ENCODE measurements at regions of chr15 and their contacts with region 1.

Region 1: DNA sequence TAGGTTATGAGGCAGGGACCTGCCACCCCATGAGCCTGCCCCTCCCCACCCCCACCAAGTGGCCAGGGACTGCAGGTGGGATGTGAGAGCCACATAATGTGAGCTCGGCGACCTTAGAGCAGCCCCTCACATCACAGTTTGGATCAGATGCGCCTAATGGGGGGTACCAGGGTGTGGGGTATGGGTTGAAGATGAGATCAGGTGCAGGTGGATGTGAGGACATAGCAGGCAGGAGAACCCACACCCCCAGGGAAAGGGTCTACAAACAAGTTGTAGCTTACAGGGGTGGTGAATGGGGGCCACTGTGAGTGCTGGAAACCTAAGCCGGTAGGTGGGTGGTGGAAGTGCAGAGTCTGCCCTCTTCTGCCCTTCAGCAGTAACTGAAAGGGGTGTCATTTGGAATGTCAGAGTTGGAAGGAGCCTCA is 94.0 kb downstream of the CORO2B start:
- DNase-seq: no peak
- ATAC-seq: no peak
- H3K4me3 ChIP-seq: no peak overlapping the region
- H3K27ac ChIP-seq: no peak overlapping the region
- H3K4me1 ChIP-seq: peaks cover 2% of the 10 kb centered on the region; the same call in 1 of the 2 replicates
- H3K27me3 ChIP-seq: no peaks in the 10 kb centered on the region
- CTCF ChIP-seq: peak; percentile 41

Region 2: DNA sequence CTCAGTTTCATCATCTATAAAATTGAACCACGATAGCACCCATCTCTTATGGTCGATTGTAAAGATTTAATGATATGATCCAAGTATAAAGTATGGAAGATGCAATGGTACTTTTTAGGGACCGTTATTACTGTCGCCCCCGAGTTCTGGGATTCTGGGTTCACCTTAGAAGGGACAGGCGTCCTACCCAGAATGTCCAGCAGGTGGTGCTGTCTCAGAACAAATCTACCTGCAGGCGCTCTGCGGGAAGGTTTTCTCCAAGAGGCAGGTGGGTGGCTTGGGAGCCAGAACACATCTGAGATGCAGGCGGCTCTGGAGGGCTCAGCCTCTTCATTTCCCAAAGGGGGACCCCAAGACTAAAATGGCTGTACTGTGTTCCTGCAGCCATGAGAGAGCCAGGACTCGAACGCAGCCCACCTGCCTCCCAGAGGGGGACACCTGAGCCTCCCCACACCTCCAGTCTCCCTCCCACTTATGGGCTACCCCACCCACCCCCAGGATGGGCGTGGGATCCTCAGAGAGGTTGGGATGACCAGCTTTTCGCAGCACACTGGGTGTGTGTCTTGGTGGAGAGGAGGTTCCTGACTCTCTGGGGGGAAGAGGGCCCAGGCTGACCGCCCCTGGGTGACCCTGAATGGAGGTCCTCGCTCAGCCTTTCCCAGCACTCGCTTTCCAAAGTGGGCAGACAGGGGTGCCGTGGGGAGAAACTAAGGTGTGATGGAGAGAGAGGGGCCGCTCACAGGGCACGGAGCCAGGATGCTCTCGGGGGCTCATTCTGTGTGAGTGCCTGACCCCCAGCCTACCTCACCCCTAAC is 122.1 kb before region 1 on chr15:
- CTCF ChIA-PET with region 1: interaction called, 17 read pairs
- POLR2A ChIA-PET with region 1: interaction called, 24 read pairs
- in situ Hi-C with region 1: no loop called
- intact Hi-C with region 1: loop called (anchors 2 kb)
- DNase-seq: peak; percentile 38
- ATAC-seq: peak; percentile 59; the same call in 1 of the 2 replicates
- H3K4me3 ChIP-seq: no peak overlapping the region
- H3K27ac ChIP-seq: no peak overlapping the region
- H3K4me1 ChIP-seq: no peaks in the 10 kb centered on the region; the same call in 1 of the 2 replicates
- H3K27me3 ChIP-seq: no peaks in the 10 kb centered on the region
- CTCF ChIP-seq: peak; percentile 94

Region 3: GRCh38 chr15:68642491-68642845 is 30.3 kb before region 1 on chr15:
- CTCF ChIA-PET with region 1: no interaction called
- POLR2A ChIA-PET with region 1: interaction called, 14 read pairs
- in situ Hi-C with region 1: no loop called
- intact Hi-C with region 1: no loop called
- DNase-seq: no peak
- ATAC-seq: no peak
- H3K4me3 ChIP-seq: no peak overlapping the region
- H3K27ac ChIP-seq: no peak overlapping the region
- H3K4me1 ChIP-seq: no peaks in the 10 kb centered on the region
- H3K27me3 ChIP-seq: no peaks in the 10 kb centered on the region
- CTCF ChIP-seq: no peak

Region 4: DNA sequence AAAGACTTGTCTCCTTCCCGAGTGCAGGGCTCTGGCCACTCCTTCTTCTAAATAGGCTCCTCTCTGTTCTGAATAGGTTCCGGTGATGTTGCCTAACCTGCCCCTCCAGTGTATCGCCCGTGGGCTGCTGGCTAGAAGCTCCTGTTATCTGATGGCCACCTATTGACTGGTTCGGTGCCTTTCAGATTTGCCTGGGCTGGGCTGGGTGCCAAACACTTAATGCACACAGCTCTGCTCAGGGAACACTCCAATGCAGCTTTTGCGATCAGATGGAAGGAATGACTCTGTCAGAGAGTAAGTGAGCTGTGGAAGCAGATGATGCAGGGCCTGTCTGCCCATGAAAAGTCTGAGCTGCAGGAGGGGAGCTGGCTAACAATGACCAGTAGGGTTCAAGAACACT is 18.9 kb after region 1 on chr15:
- CTCF ChIA-PET with region 1: interaction called, 10 read pairs
- POLR2A ChIA-PET with region 1: no interaction called
- in situ Hi-C with region 1: no loop called
- intact Hi-C with region 1: no loop called
- DNase-seq: no peak
- ATAC-seq: no peak
- H3K4me3 ChIP-seq: no peak overlapping the region
- H3K27ac ChIP-seq: no peak overlapping the region
- H3K4me1 ChIP-seq: no peaks in the 10 kb centered on the region
- H3K27me3 ChIP-seq: no peaks in the 10 kb centered on the region; the same call in 1 of the 2 replicates
- CTCF ChIP-seq: no peak

Region 5: DNA sequence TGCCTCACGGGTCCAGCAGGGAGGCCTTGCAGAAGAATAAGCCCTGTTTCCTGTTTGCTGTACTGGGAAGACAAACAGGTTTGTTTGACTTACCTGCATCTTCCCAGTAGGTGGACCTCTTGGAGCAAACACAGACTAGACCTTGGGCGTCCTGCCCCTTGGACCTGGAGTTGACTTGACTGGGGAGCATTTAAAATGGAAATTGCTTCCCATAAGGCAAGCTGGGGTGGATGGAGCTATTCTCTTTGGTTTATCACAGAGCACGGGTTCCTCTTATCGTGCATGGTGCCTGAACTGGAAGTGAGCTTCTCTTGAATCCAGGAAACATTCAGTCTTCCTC is 931.2 kb after region 1 on chr15:
- CTCF ChIA-PET with region 1: no interaction called
- POLR2A ChIA-PET with region 1: interaction called, 22 read pairs
- in situ Hi-C with region 1: no loop called
- intact Hi-C with region 1: no loop called
- DNase-seq: no peak
- ATAC-seq: peak; percentile 82
- H3K4me3 ChIP-seq: no peak overlapping the region
- H3K27ac ChIP-seq: peak overlapping the region; percentile 48; the same call in 1 of the 2 replicates
- H3K4me1 ChIP-seq: peaks cover 14% of the 10 kb centered on the region
- H3K27me3 ChIP-seq: no peaks in the 10 kb centered on the region
- CTCF ChIP-seq: no peak; the same call in 1 of the 2 replicates